ENCODE measurements at regions of chr22 and their contacts with region 1.

Region 1: DNA sequence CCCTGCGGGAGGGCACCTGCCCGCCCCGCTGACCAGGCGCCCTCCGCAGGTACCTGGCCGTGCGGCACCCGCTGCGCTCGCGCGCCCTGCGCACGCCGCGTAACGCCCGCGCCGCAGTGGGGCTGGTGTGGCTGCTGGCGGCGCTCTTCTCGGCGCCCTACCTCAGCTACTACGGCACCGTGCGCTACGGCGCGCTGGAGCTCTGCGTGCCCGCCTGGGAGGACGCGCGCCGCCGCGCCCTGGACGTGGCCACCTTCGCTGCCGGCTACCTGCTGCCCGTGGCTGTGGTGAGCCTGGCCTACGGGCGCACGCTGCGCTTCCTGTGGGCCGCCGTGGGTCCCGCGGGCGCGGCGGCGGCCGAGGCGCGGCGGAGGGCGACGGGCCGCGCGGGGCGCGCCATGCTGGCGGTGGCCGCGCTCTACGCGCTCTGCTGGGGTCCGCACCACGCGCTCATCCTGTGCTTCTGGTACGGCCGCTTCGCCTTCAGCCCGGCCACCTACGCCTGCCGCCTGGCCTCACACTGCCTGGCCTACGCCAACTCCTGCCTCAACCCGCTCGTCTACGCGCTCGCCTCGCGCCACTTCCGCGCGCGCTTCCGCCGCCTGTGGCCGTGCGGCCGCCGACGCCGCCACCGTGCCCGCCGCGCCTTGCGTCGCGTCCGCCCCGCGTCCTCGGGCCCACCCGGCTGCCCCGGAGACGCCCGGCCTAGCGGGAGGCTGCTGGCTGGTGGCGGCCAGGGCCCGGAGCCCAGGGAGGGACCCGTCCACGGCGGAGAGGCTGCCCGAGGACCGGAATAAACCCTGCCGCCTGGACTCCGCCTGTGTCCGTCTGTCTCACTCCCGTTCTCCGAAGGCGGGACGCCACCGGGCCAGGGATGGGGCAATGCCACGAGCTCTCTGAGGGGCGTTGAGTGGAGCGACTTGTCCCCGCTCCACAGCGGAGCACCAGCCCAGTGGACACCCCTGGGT is 1.8 kb downstream of the GALR3 start:
- DNase-seq: no peak
- ATAC-seq: peak in 1 of 2 donors; percentile 33
- H3K4me3 ChIP-seq: peak overlapping the region in 3 of 4 donors; percentile 7 to 38 (median 26)
- H3K27ac ChIP-seq: no peak overlapping the region
- H3K4me1 ChIP-seq: peaks cover 7% of the 10 kb centered on the region in 2 donors
- H3K27me3 ChIP-seq: no peaks in the 10 kb centered on the region
- CTCF ChIP-seq: no peak
- POLR2A ChIP-seq: no peak

Region 2: DNA sequence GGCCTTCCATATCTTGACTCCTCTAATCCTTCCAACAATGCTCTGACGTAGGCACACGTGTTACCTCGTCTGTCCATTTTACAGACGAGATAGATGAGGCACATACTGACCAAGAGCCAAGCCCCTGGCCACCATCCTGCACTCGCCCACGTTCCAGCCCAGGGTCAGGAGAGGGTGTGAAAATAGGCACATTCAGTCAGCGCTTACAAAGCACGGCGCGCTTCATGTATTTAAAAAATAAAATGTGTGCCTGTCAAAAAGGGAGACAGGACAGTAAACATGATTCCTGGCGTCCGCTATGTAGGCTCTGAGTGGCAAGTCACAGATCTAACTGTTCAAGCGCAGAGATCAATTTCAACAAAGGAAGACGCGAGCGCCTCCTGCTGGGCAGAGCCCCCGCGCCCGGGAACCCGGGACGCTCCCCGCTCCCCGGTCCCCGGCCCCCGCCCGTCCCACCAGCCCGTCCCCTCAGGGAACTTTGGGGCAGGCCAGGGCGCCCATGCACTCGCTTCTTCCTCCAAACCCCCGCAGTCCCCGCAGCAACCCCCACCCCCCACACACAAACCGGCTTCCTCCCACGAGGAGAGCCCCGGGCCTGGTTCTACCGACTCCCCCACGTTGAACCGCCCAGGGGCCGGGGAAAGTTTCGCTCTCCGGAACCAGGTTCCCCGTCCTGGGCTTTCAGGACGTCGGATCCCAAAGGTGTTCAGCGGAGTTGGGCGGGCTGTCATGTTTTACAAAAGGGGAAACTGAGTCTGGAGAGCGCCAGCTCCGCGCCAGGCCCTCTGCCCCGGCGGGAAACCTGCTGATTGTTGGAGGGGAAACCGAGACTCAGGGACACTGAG is 626.5 kb before region 1 on chr22:
- in situ Hi-C with region 1: no loop called
- intact Hi-C with region 1: no loop called
- DNase-seq: peak; percentile 64 to 86
- ATAC-seq: peak; percentile 58 to 63
- H3K4me3 ChIP-seq: peak overlapping the region; percentile 69 to 78 (median 74)
- H3K27ac ChIP-seq: peak overlapping the region; percentile 96 to 99 (median 98)
- H3K4me1 ChIP-seq: peaks cover 30 to 40% of the 10 kb centered on the region in 2 donors
- H3K27me3 ChIP-seq: no peaks in the 10 kb centered on the region
- CTCF ChIP-seq: peak; percentile 43 to 97 (median 80)
- POLR2A ChIP-seq: peak in 1 of 2 donors; percentile 16

Region 3: GRCh38 chr22:37777122-37777687 is 47.8 kb before region 1 on chr22:
- in situ Hi-C with region 1: no loop called
- intact Hi-C with region 1: no loop called
- DNase-seq: peak; percentile 48 to 62
- ATAC-seq: peak; percentile 56 to 71
- H3K4me3 ChIP-seq: no peak overlapping the region
- H3K27ac ChIP-seq: no peak overlapping the region
- H3K4me1 ChIP-seq: peaks cover 7 to 8% of the 10 kb centered on the region in 2 donors
- H3K27me3 ChIP-seq: no peaks in the 10 kb centered on the region
- CTCF ChIP-seq: no peak
- POLR2A ChIP-seq: no peak

Region 4: GRCh38 chr22:37862570-37863325 is 37.8 kb after region 1 on chr22:
- in situ Hi-C with region 1: loop called in 1 of 4 experiments (anchors 5 kb)
- intact Hi-C with region 1: no loop called
- DNase-seq: no peak
- ATAC-seq: no peak
- H3K4me3 ChIP-seq: no peak overlapping the region
- H3K27ac ChIP-seq: peak overlapping the region; percentile 25 to 90 (median 44)
- H3K4me1 ChIP-seq: peaks cover 24 to 29% of the 10 kb centered on the region in 2 donors
- H3K27me3 ChIP-seq: no peaks in the 10 kb centered on the region
- CTCF ChIP-seq: no peak
- POLR2A ChIP-seq: no peak

Measured in gastrocnemius medialis (tissue), 4 donors.